Activated B cell treated with CpG ODN at 0.5 μM for 24 hours (primary cell): ENCODE measurements at regions of chr12 and their contacts with region 1.

Region 1: DNA sequence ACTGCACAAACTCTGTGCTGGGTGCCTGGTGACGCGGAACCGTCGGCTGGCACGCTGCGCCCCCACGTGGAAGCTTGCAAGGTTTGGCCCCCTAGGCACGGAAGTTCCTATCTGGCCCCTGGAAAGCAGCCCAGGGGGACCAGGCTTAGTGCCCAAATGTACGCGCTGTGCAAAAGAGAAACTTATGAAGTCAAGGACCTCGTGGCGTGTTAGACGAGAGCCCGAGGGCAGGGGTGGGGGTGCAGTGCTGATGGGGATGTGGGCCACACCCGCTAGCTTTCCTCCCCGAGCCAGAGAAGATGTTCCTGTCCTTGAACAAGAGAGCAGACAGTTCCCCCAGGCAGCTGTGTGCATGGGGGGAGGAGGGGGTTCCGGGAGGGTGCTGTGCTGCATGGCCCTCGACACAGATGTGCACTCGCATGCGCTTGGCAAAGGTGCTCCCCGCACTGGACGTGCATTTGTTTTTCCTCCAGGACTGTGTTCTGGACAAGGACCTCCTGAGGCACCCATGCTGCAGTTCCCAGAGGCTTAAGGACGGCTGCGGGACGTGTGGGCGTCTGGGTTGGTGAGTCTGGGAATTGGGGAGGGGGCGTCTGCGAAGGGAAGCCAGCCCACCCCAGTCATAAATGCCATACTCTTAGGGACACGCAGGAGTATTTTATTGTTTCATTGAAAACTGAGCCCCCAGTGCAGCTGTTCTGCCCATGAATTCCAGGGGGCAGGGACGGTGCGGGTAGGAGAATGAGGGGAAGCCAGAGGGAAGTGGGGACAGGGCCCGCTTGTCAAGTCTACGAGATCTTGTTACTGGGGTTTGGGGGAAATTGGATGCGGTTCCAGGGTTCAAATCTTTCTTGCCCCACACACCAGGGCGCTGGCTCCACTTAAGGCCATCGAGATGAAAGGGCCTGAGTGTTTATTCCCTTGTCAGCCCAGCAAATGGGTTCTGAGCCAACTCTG is 80.0 kb downstream of the NTF3 start:
- DNase-seq: no peak
- ATAC-seq: no peak
- H3K4me3 Mint-ChIP-seq: no peak overlapping the region
- H3K27ac Mint-ChIP-seq: no peak overlapping the region
- H3K4me1 Mint-ChIP-seq: no peaks in the 10 kb centered on the region
- H3K27me3 Mint-ChIP-seq: peaks cover 11% of the 10 kb centered on the region
- CTCF ChIP-seq: no peak

Region 2: GRCh38 chr12:5428332-5429221 is 83.3 kb before region 1 on chr12:
- CTCF ChIA-PET with region 1: no interaction called
- POLR2A ChIA-PET with region 1: no interaction called
- intact Hi-C with region 1: loop called (anchors 2 kb)
- DNase-seq: no peak
- ATAC-seq: no peak
- H3K4me3 Mint-ChIP-seq: no peak overlapping the region
- H3K27ac Mint-ChIP-seq: no peak overlapping the region
- H3K4me1 Mint-ChIP-seq: peaks cover 24% of the 10 kb centered on the region
- H3K27me3 Mint-ChIP-seq: peaks cover 39% of the 10 kb centered on the region
- CTCF ChIP-seq: no peak